ENCODE measurements at regions of chr1 and their contacts with region 1.

Region 1: GRCh38 chr1:174159252-174160108 is at the start of gene RABGAP1L:
- DNase-seq: peak; percentile 87 to 98
- ATAC-seq: peak; percentile 88 to 96 (median 88)
- H3K4me3 ChIP-seq: peak within 1 kb of the TSS; percentile 81
- H3K4me3 Mint-ChIP-seq: peak within 1 kb of the TSS; percentile 92
- H3K27ac ChIP-seq: peak within 1 kb of the TSS; percentile 93
- H3K27ac Mint-ChIP-seq: peak within 1 kb of the TSS; percentile 86 to 98
- H3K4me1 ChIP-seq: peaks cover 22% of the 10 kb centered on the region
- H3K4me1 Mint-ChIP-seq: peaks cover 34 to 60% of the 10 kb centered on the region in 2 donors
- H3K27me3 ChIP-seq: no peaks in the 10 kb centered on the region
- H3K27me3 Mint-ChIP-seq: no peaks in the 10 kb centered on the region
- CTCF ChIP-seq: no peak
- total RNA-seq, gene RABGAP1L: 145 to 168 (median 153) TPM

Region 2: DNA sequence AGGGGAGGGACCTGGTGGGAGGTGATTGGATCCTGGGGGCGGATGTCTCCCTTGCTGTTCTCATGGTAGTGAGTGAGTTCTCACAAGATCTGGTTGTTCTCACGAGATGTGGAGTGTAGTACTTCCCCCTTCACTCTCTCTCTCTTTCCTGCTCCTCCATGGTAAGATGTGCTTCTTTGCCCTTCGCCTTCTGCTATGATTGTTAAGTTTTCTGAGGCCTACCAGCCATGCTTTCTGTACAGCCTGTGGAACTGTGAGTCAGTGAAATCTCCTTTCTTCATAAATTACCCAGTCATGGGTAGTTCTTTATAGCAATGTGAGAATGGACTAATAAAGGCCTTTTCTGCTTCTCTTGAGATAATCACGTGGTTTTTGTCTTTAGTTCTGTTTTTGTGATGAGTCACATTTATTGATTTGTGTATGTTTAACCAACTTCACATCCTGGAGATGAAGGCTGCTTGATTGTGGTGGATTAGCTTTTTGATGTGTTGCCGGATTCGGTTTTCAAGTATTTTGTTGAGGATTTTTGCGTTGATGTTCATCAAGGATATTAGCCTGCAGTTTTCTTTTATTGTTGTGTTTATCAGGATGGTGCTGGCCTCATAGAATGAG is 45.3 kb after region 1 on chr1:
- intact Hi-C with region 1: loop called (anchors 5 kb)
- DNase-seq: peak in 1 of 2 donors; percentile 54
- ATAC-seq: peak; percentile 24 to 44 (median 40)
- H3K4me3 ChIP-seq: no peak overlapping the region
- H3K4me3 Mint-ChIP-seq: no peak overlapping the region
- H3K27ac ChIP-seq: no peak overlapping the region
- H3K27ac Mint-ChIP-seq: peak overlapping the region; percentile 49 to 61
- H3K4me1 ChIP-seq: peaks cover 4% of the 10 kb centered on the region
- H3K4me1 Mint-ChIP-seq: peaks cover 62 to 69% of the 10 kb centered on the region in 2 donors
- H3K27me3 ChIP-seq: no peaks in the 10 kb centered on the region
- H3K27me3 Mint-ChIP-seq: no peaks in the 10 kb centered on the region
- CTCF ChIP-seq: no peak

Measured in natural killer cell (primary cell).